Right cardiac atrium (tissue), 5 donors: ENCODE measurements at regions of chr5 and their contacts with region 1.

Region 1: DNA sequence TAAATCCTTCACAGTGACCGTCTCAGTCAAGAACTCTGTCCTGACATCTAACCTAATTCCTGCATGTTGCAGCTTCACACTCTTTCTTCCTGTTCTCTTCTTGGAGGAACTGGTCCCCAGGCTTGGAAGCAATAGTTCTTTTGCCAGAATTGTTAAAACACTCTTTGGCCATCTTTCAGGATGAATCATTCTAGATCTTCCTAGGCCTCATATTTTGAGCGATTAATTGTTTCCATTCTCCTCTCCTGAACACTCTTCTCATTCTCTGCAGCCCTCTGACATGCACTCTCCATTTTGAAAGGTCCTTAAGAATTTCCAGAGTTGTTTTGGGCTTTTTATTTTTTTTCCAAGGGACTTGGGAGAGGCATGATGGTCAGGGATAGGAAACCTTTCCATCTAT is 85.8 kb downstream of the FAM114A2 start:
- DNase-seq: no peak
- ATAC-seq: no peak
- H3K4me3 ChIP-seq: no peak overlapping the region
- H3K27ac ChIP-seq: no peak overlapping the region
- H3K4me1 ChIP-seq: no peaks in the 10 kb centered on the region
- H3K27me3 ChIP-seq: no peaks in the 10 kb centered on the region

Region 2: GRCh38 chr5:153504726-153505125 is 448.2 kb before region 1 on chr5:
- intact Hi-C with region 1: loop called in 2 of 4 experiments (anchors 5 to 10 kb)
- DNase-seq: no peak
- ATAC-seq: no peak
- H3K4me3 ChIP-seq: no peak overlapping the region
- H3K27ac ChIP-seq: no peak overlapping the region
- H3K4me1 ChIP-seq: no peaks in the 10 kb centered on the region
- H3K27me3 ChIP-seq: no peaks in the 10 kb centered on the region

Region 3: DNA sequence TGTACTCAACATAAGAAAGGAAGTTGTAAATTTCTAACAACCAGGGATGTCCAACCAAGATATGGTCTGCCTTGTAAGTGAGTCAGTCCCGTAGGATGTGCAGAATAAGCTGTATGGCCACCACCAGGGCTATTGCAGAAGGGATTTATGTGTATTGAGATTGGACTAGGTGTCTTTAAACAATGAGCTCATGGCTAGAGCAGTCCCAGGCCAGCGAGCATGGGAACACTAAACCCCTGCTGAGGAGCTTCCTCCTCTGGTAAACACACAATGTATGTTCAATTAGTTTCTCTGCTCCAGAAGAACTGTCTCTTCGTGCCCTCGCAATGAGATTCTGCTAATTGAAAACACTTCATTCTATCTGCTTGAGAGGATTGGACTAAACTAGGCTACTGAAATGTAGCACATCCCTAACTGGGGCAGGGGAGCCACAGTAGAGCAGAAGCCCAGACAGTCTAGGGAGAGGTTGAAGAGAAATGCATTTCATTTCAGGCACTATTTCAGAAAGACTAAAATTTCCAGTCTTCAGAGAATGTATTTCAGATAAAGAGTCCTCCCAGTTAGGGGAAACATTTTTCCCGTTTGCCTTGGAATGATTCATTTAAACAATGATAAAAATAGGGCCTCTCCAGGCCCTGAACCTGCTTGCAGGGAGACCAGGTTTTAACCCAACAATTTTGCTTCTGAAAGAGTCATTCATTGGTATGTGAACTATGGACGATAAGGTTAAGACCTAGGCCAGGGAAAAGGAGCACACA is 68.9 kb before region 1 on chr5:
- intact Hi-C with region 1: no loop called
- DNase-seq: no peak
- ATAC-seq: no peak
- H3K4me3 ChIP-seq: no peak overlapping the region
- H3K27ac ChIP-seq: no peak overlapping the region
- H3K4me1 ChIP-seq: no peaks in the 10 kb centered on the region
- H3K27me3 ChIP-seq: no peaks in the 10 kb centered on the region

Region 4: GRCh38 chr5:154723740-154724505 is 771.0 kb after region 1 on chr5:
- intact Hi-C with region 1: no loop called
- DNase-seq: no peak
- ATAC-seq: peak; percentile 73 to 74
- H3K4me3 ChIP-seq: no peak overlapping the region
- H3K27ac ChIP-seq: peak overlapping the region; percentile 71
- H3K4me1 ChIP-seq: peaks cover 2% of the 10 kb centered on the region
- H3K27me3 ChIP-seq: no peaks in the 10 kb centered on the region